ENCODE measurements at regions of chr17 and their contacts with region 1.

Region 1: GRCh38 chr17:16991349-16992009 is 19.6 kb upstream of the TNFRSF13B start:
- DNase-seq: peak; percentile 62 to 79
- H3K4me3 ChIP-seq: no peak overlapping the region
- H3K27ac ChIP-seq: no peak overlapping the region
- H3K4me1 ChIP-seq: peaks cover 19% of the 10 kb centered on the region
- H3K27me3 ChIP-seq: no peaks in the 10 kb centered on the region
- CTCF ChIP-seq: peak; percentile 91

Region 2: DNA sequence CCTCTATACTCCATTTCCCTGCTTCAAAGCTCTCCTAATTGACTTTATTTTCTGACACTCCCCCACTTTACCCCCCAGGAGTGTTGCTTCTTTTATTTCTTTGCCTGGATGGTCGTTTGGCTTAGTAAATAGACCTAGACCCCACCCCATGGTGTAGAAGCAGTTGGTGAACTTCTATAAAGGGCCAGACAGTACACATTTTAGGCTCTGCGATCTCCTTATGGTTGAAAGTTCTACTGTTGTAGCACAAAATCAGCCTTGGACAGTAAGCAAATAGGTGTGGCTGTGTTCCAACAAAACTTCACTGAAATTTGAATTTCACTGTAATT is 454.4 kb before region 1 on chr17:
- CTCF ChIA-PET with region 1: no interaction called
- POLR2A ChIA-PET with region 1: no interaction called
- intact Hi-C with region 1: loop called (anchors 2 kb)
- DNase-seq: no peak
- H3K4me3 ChIP-seq: no peak overlapping the region; the same call in 1 of the 2 replicates
- H3K27ac ChIP-seq: no peak overlapping the region
- H3K4me1 ChIP-seq: no peaks in the 10 kb centered on the region
- H3K27me3 ChIP-seq: no peaks in the 10 kb centered on the region
- CTCF ChIP-seq: 0 out of 2 replicates have a peak, but pooled peaks have one; percentile 7

Region 3: GRCh38 chr17:16568541-16569357 is 422.7 kb before region 1 on chr17 and contains the start of gene ZNF287:
- CTCF ChIA-PET with region 1: interaction called, 10 read pairs
- POLR2A ChIA-PET with region 1: no interaction called
- intact Hi-C with region 1: no loop called
- DNase-seq: peak in 1 of 2 experiments; percentile 83
- H3K4me3 ChIP-seq: no peak within 1 kb of the TSS
- H3K27ac ChIP-seq: no peak within 1 kb of the TSS
- H3K4me1 ChIP-seq: no peaks in the 10 kb centered on the region
- H3K27me3 ChIP-seq: peaks cover 4% of the 10 kb centered on the region; the same call in 1 of the 2 replicates
- CTCF ChIP-seq: no peak
- total RNA-seq, gene ZNF287: 4.3 and 4.5 TPM in 2 replicates

Region 4: DNA sequence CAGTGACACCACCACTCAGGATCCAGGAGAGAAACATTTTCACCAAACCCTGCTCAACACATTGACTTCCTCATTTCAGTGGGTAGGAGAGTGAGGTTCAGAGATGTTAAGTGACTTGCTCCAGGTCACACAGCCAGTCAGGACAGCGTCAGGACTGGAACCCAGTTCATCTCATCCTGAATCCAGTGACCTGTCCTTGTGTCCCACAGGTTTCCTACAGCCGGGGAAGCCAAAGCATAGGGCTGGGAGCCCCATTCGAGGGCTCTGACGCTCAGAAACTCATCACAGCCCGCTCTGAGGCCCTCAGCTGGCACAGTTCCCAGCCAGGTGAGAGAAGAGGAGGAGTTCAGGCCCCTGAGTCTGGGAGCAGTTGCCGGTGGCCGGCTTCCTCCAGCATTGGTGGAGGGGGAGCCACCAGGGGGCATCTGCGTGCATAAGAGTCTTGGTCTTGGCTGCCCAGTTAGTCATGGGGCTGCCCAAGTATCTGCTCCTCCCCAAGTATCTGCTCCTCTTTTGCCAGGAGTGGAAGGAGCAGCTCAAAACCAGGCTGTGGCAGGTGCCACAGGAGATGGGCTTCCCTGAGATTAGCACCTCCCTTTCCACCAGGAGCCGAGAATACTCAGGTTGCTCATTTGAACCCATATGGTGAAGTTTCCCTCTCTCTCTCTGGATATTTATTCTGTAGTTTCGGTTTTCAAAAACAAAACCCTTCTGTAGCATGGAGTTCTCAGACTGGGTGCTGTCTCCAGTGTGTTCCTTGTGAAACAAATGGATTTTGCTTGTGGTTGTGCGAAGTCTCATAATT is 75.5 kb before region 1 on chr17:
- CTCF ChIA-PET with region 1: no interaction called
- POLR2A ChIA-PET with region 1: no interaction called
- intact Hi-C with region 1: loop called (anchors 5 kb)
- DNase-seq: peak; percentile 56 to 73
- H3K4me3 ChIP-seq: no peak overlapping the region
- H3K27ac ChIP-seq: no peak overlapping the region
- H3K4me1 ChIP-seq: no peaks in the 10 kb centered on the region
- H3K27me3 ChIP-seq: no peaks in the 10 kb centered on the region
- CTCF ChIP-seq: peak; percentile 70

Region 5: DNA sequence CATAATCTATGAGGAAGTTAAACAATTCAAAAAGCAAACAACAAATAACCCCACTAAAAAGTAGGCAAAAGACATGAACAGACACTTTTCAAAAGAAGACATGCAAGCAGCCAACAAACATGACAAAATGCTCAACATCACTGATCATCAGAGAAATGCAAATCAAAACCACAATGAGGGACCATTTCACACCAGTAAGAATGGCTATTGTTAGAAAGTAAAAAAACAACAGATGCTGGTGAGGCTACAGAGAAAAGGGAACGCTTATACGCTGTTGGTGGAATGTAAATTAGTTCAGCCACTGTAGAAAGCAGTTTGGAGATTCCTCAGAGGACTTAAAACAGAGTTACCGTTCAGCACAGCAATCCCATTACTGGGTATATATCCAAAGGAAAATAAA is 44.0 kb before region 1 on chr17:
- CTCF ChIA-PET with region 1: interaction called, 20 read pairs
- POLR2A ChIA-PET with region 1: no interaction called
- intact Hi-C with region 1: no loop called
- DNase-seq: no peak
- H3K4me3 ChIP-seq: no peak overlapping the region
- H3K27ac ChIP-seq: no peak overlapping the region
- H3K4me1 ChIP-seq: peaks cover 11% of the 10 kb centered on the region
- H3K27me3 ChIP-seq: no peaks in the 10 kb centered on the region
- CTCF ChIP-seq: no peak